ENCODE measurements at regions of chr11 and their contacts with region 1.

Region 1: GRCh38 chr11:390175-390574 is 3.8 kb upstream of the PKP3 start:
- DNase-seq: no peak
- H3K4me3 ChIP-seq: no peak overlapping the region
- H3K27ac ChIP-seq: no peak overlapping the region
- H3K4me1 ChIP-seq: peaks cover 6 to 14% (median 6%) of the 10 kb centered on the region in 4 experiments; a peak in 6 of 7 replicates
- H3K27me3 ChIP-seq: no peaks in the 10 kb centered on the region
- CTCF ChIP-seq: peak in 2 of 3 experiments; percentile 56 to 67; a peak in 3 of 4 replicates
- EP300 ChIP-seq: no peak
- POLR2A ChIP-seq: no peak
- RAD21 ChIP-seq: peak; percentile 37 to 57

Region 2: DNA sequence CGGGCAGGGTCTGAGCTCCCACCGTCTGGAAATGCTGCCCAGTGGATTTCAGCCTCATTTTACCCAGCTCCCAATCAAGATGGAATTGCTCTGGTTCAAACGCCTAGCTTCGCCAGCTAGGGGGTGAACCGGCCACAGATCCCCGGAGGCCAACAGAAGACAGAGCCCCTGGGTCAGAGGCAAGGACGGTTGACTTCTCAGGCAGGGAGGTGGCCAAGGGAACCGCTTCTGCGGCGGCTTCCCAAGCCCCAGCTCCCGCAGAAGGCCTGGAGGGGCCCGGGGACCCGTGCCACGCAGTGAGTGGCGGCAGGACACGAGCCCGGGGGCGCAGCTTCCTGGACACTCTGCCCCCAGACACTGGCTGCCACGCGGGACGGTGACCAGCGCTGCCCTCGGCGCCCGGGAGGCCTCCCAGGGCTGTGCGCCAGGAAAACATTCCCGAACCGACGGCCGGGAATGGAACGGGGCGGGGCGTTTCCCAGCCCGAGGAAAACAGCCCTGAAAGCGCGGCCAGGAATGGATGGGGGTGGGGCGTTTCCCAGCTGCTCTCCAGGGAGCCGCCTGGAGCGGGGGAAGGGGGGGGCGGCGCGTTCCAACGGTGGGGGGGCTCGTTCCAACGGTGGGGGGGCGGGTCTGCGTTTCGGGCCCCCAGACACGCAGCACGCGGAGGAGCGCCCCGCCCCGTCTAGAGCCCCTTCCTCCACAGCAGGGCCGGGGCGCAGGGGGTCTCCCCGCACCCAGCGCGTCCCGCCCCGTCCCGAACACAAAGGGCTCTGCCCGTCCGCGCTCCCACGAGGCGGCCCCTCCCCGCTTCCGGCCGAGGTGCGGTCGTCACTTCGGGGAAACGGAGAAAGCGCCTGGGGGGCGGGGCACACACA is 34.4 kb before region 1 on chr11:
- CTCF ChIA-PET with region 1: no interaction called
- POLR2A ChIA-PET with region 1: no interaction called
- DNase-seq: peak; percentile 66 to 90
- H3K4me3 ChIP-seq: peak overlapping the region in 3 of 4 experiments; percentile 3 to 47 (median 22); a peak in 5 of 8 replicates
- H3K27ac ChIP-seq: peak overlapping the region; percentile 84
- H3K4me1 ChIP-seq: peaks cover 4 to 8% (median 6%) of the 10 kb centered on the region in 4 experiments
- H3K27me3 ChIP-seq: no peaks in the 10 kb centered on the region; a peak in 1 of 7 replicates
- CTCF ChIP-seq: no peak
- EP300 ChIP-seq: 0 out of 3 replicates have a peak, but pooled peaks of 1 of the 2 experiments have one; percentile 57
- POLR2A ChIP-seq: peak in 1 of 2 experiments; percentile 71; a peak in 2 of 3 replicates
- RAD21 ChIP-seq: peak in 1 of 2 experiments; percentile 6; a peak in 2 of 4 replicates

Region 3: GRCh38 chr11:376531-377173 is 13.5 kb before region 1 on chr11:
- CTCF ChIA-PET with region 1: interaction called, 11 read pairs
- POLR2A ChIA-PET with region 1: interaction called, 7 read pairs
- DNase-seq: no peak
- H3K4me3 ChIP-seq: no peak overlapping the region
- H3K27ac ChIP-seq: no peak overlapping the region
- H3K4me1 ChIP-seq: no peaks in the 10 kb centered on the region
- H3K27me3 ChIP-seq: no peaks in the 10 kb centered on the region
- CTCF ChIP-seq: no peak
- EP300 ChIP-seq: no peak
- POLR2A ChIP-seq: no peak
- RAD21 ChIP-seq: no peak

Measured in H1 (cell line).